T-cell (primary cell): ENCODE measurements at regions of chr3 and their contacts with region 1.

Region 1: DNA sequence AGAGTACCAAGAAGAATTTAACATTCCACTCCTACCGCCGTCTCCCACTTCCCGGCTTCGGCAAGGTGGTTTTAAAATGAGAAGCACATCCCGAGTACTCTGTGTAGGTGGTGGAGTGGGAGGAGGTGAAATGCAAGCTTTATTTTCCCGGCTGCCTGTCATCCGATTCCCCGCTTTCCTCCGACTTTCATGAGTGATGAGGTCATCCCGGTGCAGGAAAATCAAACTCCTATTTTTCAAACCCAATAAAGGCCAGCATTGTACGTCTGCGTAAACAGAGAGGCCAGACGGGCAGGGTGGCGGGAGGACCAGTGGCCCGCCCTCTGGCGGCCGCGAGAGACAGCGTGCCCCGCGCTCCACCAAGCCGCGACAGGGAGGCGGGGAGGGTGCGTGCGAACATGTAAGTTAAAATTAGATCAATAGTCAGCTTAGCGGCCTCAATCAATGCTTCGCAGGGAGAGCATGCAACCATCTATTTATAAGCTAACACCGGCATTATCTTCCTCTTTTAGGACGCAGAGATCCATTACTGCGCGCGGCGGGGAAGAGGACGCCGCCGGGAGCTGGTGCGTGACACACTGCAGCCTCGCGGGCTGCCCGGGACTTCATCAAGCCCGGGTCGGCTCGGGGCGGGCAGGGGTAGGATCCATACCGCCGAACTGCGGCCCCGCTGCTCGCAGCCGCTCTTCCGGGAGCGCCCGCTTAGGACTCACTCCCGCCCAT is 163.3 kb downstream of the CD47 start:
- DNase-seq: peak; percentile 21 to 76 (median 53)
- ATAC-seq: peak; percentile 90 to 95 (median 92)
- H3K4me3 ChIP-seq: peak overlapping the region; percentile 64 to 90
- H3K4me3 Mint-ChIP-seq: peak overlapping the region; percentile 83 to 86 (median 83)
- H3K27ac ChIP-seq: no peak overlapping the region
- H3K27ac Mint-ChIP-seq: peak overlapping the region in 1 of 2 donors; percentile 12
- H3K4me1 ChIP-seq: peaks cover 2 to 13% of the 10 kb centered on the region in 2 experiments
- H3K4me1 Mint-ChIP-seq: peaks cover 14% of the 10 kb centered on the region in 3 donors
- H3K27me3 ChIP-seq: peaks cover 0 to 20% of the 10 kb centered on the region in 2 experiments
- H3K27me3 Mint-ChIP-seq: peaks cover 5 to 10% of the 10 kb centered on the region in 2 donors

Region 2: GRCh38 chr3:107976202-107976800 is 48.8 kb after region 1 on chr3:
- CTCF ChIA-PET with region 1: interaction called in 1 of 2 experiments, 12 read pairs
- POLR2A ChIA-PET with region 1: no interaction called
- DNase-seq: no peak
- ATAC-seq: peak in 2 of 4 experiments; percentile 11 to 31
- H3K4me3 ChIP-seq: no peak overlapping the region
- H3K4me3 Mint-ChIP-seq: peak overlapping the region in 2 of 3 donors; percentile 37 to 75
- H3K27ac ChIP-seq: peak overlapping the region; percentile 36
- H3K27ac Mint-ChIP-seq: peak overlapping the region; percentile 95 to 96
- H3K4me1 ChIP-seq: peaks cover 47 to 48% of the 10 kb centered on the region in 2 experiments
- H3K4me1 Mint-ChIP-seq: peaks cover 64 to 77% (median 74%) of the 10 kb centered on the region in 3 donors
- H3K27me3 ChIP-seq: no peaks in the 10 kb centered on the region
- H3K27me3 Mint-ChIP-seq: no peaks in the 10 kb centered on the region